ENCODE measurements at regions of chr4 and their contacts with region 1.

Region 1: DNA sequence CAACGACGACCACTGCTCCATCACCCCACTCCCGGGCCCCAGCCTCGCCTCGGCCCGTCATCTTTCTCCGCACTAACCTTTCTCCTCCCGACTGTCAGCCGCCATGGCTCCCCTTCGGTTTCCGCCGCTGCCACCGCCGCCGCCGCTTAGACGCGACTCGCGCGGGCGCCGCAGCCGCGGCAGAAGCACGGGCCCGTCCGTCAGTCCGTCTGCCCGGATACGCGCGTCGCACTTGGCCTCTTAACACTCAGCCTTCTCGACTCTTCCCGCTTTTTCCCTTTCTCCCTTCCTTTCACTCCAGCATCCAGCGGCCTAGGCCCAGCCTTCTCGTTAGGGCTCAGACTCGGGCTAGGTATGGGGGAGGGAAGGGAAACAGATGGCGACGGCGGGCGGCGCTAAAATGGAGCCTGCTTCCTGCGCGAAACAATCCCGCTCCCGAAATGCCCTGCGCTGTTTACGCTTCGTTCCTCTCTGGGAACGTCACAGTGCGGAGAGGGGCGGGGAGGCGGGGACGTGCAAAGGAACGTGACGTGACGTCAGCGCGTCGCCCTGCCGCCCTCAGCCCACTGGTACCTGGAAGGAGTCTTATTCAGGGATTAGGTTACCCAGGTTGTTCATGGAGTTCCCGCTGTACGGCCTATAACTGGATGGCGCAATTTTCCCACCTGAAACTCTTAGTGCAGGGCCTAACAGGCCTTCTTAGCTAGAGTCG is at the start of gene YTHDC1:
- DNase-seq: peak; percentile 92 to 99 (median 96)
- ATAC-seq: peak; percentile 95
- H3K4me3 ChIP-seq: peak within 1 kb of the TSS; percentile 86 to 97
- H3K4me3 Mint-ChIP-seq: peak within 1 kb of the TSS; percentile 94
- H3K27ac ChIP-seq: peak within 1 kb of the TSS; percentile 95 to 96
- H3K27ac Mint-ChIP-seq: peak within 1 kb of the TSS; percentile 100
- H3K4me1 ChIP-seq: peaks cover 33% of the 10 kb centered on the region
- H3K4me1 Mint-ChIP-seq: peaks cover 38% of the 10 kb centered on the region
- H3K27me3 ChIP-seq: no peaks in the 10 kb centered on the region
- H3K27me3 Mint-ChIP-seq: no peaks in the 10 kb centered on the region
- CTCF ChIP-seq: no peak
- total RNA-seq, gene YTHDC1: 392 to 396 TPM

Region 2: GRCh38 chr4:67700738-67701516 is 648.9 kb before region 1 on chr4 and contains the start of gene UBA6:
- CTCF ChIA-PET with region 1: no interaction called
- POLR2A ChIA-PET with region 1: no interaction called
- intact Hi-C with region 1: loop called (anchors 2 to 10 kb)
- DNase-seq: peak; percentile 85 to 97 (median 95)
- ATAC-seq: peak; percentile 96
- H3K4me3 ChIP-seq: peak within 1 kb of the TSS; percentile 77 to 84
- H3K4me3 Mint-ChIP-seq: peak within 1 kb of the TSS; percentile 98
- H3K27ac ChIP-seq: peak within 1 kb of the TSS; percentile 78 to 79
- H3K27ac Mint-ChIP-seq: peak within 1 kb of the TSS; percentile 97
- H3K4me1 ChIP-seq: peaks cover 17% of the 10 kb centered on the region
- H3K4me1 Mint-ChIP-seq: peaks cover 70% of the 10 kb centered on the region
- H3K27me3 ChIP-seq: no peaks in the 10 kb centered on the region
- H3K27me3 Mint-ChIP-seq: no peaks in the 10 kb centered on the region
- CTCF ChIP-seq: peak; percentile 39
- total RNA-seq, gene UBA6: 35.9 to 44.7 TPM

Region 3: GRCh38 chr4:68310651-68311247 is 39.1 kb before region 1 on chr4:
- CTCF ChIA-PET with region 1: no interaction called
- POLR2A ChIA-PET with region 1: no interaction called
- intact Hi-C with region 1: loop called (anchors 5 kb)
- DNase-seq: no peak
- ATAC-seq: no peak
- H3K4me3 ChIP-seq: no peak overlapping the region
- H3K4me3 Mint-ChIP-seq: no peak overlapping the region
- H3K27ac ChIP-seq: no peak overlapping the region
- H3K27ac Mint-ChIP-seq: no peak overlapping the region
- H3K4me1 ChIP-seq: no peaks in the 10 kb centered on the region
- H3K4me1 Mint-ChIP-seq: no peaks in the 10 kb centered on the region
- H3K27me3 ChIP-seq: peaks cover 0 to 2% of the 10 kb centered on the region in 2 experiments
- H3K27me3 Mint-ChIP-seq: no peaks in the 10 kb centered on the region
- CTCF ChIP-seq: no peak

Region 4: GRCh38 chr4:69749771-69750170 is 1400.0 kb after region 1 on chr4:
- CTCF ChIA-PET with region 1: no interaction called
- POLR2A ChIA-PET with region 1: no interaction called
- intact Hi-C with region 1: loop called in 1 of 2 experiments (anchors 10 kb)
- DNase-seq: no peak
- ATAC-seq: no peak
- H3K4me3 ChIP-seq: no peak overlapping the region
- H3K4me3 Mint-ChIP-seq: no peak overlapping the region
- H3K27ac ChIP-seq: no peak overlapping the region
- H3K27ac Mint-ChIP-seq: no peak overlapping the region
- H3K4me1 ChIP-seq: no peaks in the 10 kb centered on the region
- H3K4me1 Mint-ChIP-seq: peaks cover 9% of the 10 kb centered on the region
- H3K27me3 ChIP-seq: no peaks in the 10 kb centered on the region
- H3K27me3 Mint-ChIP-seq: no peaks in the 10 kb centered on the region
- CTCF ChIP-seq: no peak

Measured in CD8-positive, alpha-beta T cell (primary cell).